MCF 10A (cell line): ENCODE measurements at regions of chr2 and their contacts with region 1.

Region 1: DNA sequence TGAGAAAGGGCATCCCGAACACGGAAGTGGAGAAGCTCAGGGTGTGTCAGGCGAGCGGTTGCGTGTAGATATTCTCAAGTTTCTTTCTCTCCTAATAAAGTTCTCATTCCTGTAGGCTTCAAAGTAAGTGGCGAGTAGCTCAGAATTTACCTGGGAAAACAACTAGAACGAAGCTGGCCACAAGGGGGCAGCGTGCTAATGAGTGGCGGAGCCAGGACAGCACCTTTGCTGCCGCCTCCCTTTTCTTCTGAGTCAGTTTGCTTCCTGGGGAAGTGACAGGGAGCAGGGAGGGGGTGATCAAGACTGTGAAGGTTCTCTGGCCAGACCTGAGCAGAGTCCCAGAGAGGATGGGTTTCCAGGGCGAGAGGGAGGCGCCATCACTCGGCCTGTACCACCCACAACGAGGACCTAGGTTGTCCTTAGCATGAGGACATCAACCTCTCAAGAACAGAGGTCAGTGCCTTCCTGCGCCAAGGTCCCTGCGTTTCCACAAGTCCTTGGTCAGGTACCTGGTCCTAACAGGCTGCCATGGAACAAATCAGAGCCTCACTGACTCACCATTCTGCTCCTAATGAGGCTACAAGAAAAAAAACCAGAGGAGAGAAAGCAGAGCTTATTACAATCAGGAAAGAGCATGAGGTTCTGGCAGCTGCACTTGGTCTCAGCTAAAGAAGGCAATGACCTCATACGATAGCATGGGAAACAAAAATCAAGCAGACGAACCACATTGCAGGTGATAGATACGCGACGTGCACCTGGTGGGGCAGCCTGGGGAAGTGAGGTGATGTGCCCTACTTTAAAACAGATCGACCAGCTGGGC is 98.6 kb downstream of the PLB1 start:
- DNase-seq: peak; percentile 90
- H3K4me3 Mint-ChIP-seq: peak overlapping the region; percentile 48
- H3K27ac Mint-ChIP-seq: peak overlapping the region; percentile 81
- H3K4me1 Mint-ChIP-seq: peaks cover 25% of the 10 kb centered on the region
- H3K27me3 Mint-ChIP-seq: no peaks in the 10 kb centered on the region
- CTCF ChIP-seq: peak; percentile 66

Region 2: DNA sequence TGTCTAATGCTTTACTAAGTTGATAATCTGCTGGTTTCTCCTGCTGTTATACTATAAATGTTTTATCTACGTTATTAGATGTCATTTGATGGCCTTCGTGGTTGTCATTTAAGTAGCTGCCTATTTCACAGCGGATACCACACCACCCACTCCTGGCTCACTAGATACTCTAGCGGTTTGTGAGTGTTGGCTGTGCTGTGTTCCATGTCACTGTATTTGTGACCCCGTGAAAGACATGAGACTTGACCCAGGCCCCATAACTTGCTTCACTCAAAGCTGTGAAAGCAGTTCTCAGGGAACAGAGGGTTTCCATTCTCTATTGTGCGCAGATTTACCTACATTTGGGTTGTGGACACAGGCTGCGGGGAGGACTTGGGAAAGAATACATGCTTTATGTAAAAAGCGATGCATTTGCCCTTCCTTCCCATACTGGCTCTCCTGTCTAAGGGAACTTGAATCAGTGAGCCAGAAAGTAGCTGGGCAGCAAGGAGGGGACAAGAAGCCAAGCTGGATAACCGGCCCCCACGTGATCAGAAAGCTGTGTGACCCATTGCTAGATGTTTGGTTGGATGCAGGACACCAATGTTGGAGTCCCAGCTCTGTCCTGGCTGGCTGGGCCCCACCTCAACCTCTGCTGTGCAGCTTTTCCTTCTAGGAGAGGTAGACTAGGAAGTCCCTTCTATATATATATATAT is 46.4 kb before region 1 on chr2:
- CTCF ChIA-PET with region 1: no interaction called
- POLR2A ChIA-PET with region 1: no interaction called
- intact Hi-C with region 1: no loop called
- DNase-seq: no peak
- H3K4me3 Mint-ChIP-seq: no peak overlapping the region
- H3K27ac Mint-ChIP-seq: no peak overlapping the region
- H3K4me1 Mint-ChIP-seq: peaks cover 10% of the 10 kb centered on the region
- H3K27me3 Mint-ChIP-seq: no peaks in the 10 kb centered on the region
- CTCF ChIP-seq: no peak

Region 3: GRCh38 chr2:28566521-28567041 is 27.9 kb before region 1 on chr2:
- CTCF ChIA-PET with region 1: interaction called, 39 read pairs
- POLR2A ChIA-PET with region 1: interaction called, 36 read pairs
- intact Hi-C with region 1: loop called (anchors 1 kb)
- DNase-seq: peak; percentile 83
- H3K4me3 Mint-ChIP-seq: peak overlapping the region; percentile 78
- H3K27ac Mint-ChIP-seq: no peak overlapping the region
- H3K4me1 Mint-ChIP-seq: peaks cover 18% of the 10 kb centered on the region
- H3K27me3 Mint-ChIP-seq: no peaks in the 10 kb centered on the region
- CTCF ChIP-seq: peak; percentile 99

Region 4: GRCh38 chr2:28583899-28584553 is 10.5 kb before region 1 on chr2:
- CTCF ChIA-PET with region 1: interaction called, 35 read pairs
- POLR2A ChIA-PET with region 1: interaction called, 59 read pairs
- intact Hi-C with region 1: no loop called
- DNase-seq: peak; percentile 95
- H3K4me3 Mint-ChIP-seq: peak overlapping the region; percentile 61
- H3K27ac Mint-ChIP-seq: peak overlapping the region; percentile 84
- H3K4me1 Mint-ChIP-seq: peaks cover 34% of the 10 kb centered on the region
- H3K27me3 Mint-ChIP-seq: no peaks in the 10 kb centered on the region
- CTCF ChIP-seq: no peak

Region 5: GRCh38 chr2:28621172-28622100 is 26.9 kb after region 1 on chr2:
- CTCF ChIA-PET with region 1: interaction called, 5 read pairs
- POLR2A ChIA-PET with region 1: interaction called, 12 read pairs
- intact Hi-C with region 1: loop called (anchors 1 kb)
- DNase-seq: peak; percentile 73
- H3K4me3 Mint-ChIP-seq: peak overlapping the region; percentile 9
- H3K27ac Mint-ChIP-seq: peak overlapping the region; percentile 98
- H3K4me1 Mint-ChIP-seq: peaks cover 27% of the 10 kb centered on the region
- H3K27me3 Mint-ChIP-seq: no peaks in the 10 kb centered on the region
- CTCF ChIP-seq: peak; percentile 30

Region 6: DNA sequence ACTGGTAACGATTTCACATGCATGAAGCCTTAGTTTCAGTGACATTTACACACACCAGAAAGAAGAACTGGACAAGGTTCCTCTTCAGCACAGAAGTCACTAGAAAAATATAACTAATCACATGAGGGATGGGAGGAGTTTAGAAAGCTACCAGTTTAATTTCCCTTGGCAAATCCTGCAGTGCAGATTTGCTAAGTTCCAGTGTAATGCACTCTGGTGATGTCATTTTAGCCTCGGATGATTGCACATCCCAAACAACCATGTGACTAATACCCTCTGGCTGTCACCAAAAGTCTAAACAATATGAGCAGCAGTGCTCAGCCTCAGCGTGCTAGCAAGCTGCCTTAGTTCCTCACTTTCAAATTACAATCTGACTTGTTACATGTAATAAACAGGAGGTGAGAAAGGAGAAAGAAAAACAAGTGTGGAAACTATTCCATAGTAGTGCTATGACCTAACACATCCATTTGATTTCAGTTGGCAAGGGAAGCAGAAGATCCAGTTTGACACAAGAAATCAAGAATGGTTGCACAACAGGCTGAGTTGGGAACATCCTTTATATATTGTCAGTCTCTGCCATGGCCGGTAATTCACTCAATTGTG is 121.9 kb after region 1 on chr2:
- CTCF ChIA-PET with region 1: interaction called, 4 read pairs
- POLR2A ChIA-PET with region 1: interaction called, 22 read pairs
- intact Hi-C with region 1: no loop called
- DNase-seq: peak; percentile 90
- H3K4me3 Mint-ChIP-seq: peak overlapping the region; percentile 42
- H3K27ac Mint-ChIP-seq: peak overlapping the region; percentile 97
- H3K4me1 Mint-ChIP-seq: peaks cover 30% of the 10 kb centered on the region
- H3K27me3 Mint-ChIP-seq: no peaks in the 10 kb centered on the region
- CTCF ChIP-seq: no peak

Region 7: DNA sequence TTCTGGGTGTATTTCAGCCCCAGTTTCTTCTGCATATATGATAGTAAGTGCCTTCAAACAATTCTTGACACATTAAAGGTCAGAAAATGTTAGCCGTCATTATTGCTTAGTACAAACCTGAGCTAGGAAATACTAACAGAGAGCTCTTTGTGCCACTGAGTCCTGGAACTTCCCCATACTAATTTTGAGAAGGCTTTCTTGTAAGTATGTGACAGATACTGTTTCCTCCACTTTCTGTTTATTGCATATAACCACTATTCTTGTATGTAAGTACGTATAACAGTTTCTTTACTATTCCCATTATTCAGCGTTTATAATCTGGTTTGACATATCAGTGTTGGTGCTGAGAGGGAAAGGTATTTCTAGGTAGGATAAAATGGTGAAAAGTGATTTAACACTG is 166.9 kb after region 1 on chr2:
- CTCF ChIA-PET with region 1: interaction called, 99 read pairs
- POLR2A ChIA-PET with region 1: interaction called, 148 read pairs
- intact Hi-C with region 1: no loop called
- DNase-seq: no peak
- H3K4me3 Mint-ChIP-seq: no peak overlapping the region
- H3K27ac Mint-ChIP-seq: no peak overlapping the region
- H3K4me1 Mint-ChIP-seq: peaks cover 30% of the 10 kb centered on the region
- H3K27me3 Mint-ChIP-seq: no peaks in the 10 kb centered on the region
- CTCF ChIP-seq: no peak